K562 (cell line): ENCODE measurements at regions of chr9 and their contacts with region 1.

Region 1: GRCh38 chr9:69078581-69078980 is 43.0 kb downstream of the FXN start:
- DNase-seq: no peak
- ATAC-seq: no peak
- H3K4me3 ChIP-seq: no peak overlapping the region
- H3K27ac ChIP-seq: no peak overlapping the region
- H3K4me1 ChIP-seq: no peaks in the 10 kb centered on the region
- H3K27me3 ChIP-seq: no peaks in the 10 kb centered on the region
- CTCF ChIP-seq: no peak
- EP300 ChIP-seq: no peak
- POLR2A ChIP-seq: no peak
- RAD21 ChIP-seq: no peak

Region 2: DNA sequence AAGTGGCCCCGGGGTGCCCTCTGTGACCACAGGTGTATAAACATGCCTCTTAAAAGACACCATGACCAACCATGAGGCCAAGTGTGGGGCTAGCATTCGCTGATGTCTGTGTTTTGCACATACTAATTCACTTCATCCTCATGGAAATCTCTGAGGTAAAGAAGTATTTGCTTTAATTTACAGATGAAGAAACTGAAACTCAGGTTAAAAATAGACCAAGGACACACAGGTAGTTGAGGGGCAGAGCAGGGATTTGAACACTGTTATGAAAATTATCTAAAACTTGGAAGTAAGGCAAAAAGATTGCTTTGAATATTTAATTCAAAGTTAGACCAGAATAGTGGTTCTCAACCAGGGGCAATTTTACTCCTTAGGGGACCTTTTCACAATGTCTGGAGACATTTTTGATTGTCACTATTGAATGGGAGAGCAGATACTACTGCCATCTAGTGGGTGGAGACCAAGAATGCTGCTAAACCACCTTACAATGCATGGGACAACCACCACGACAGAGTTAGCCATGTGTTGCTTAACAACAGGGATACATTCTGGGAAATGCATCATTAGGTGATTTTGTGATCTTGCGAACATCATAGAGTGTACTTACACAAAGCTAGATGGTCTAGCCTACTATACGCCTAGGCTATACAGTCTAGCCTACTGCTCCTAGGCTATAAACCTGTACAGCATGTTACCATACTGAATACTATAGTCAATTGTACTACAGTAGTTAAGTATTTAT is 51.1 kb before region 1 on chr9:
- CTCF ChIA-PET with region 1: no interaction called
- POLR2A ChIA-PET with region 1: no interaction called
- in situ Hi-C with region 1: no loop called
- intact Hi-C with region 1: no loop called
- DNase-seq: peak; percentile 44 to 78 (median 58)
- ATAC-seq: peak; percentile 92
- H3K4me3 ChIP-seq: no peak overlapping the region
- H3K27ac ChIP-seq: no peak overlapping the region; the same call in 2 of the 3 replicates
- H3K4me1 ChIP-seq: peaks cover 13 to 25% of the 10 kb centered on the region in 2 experiments; a peak in 4 of 5 replicates
- H3K27me3 ChIP-seq: no peaks in the 10 kb centered on the region
- CTCF ChIP-seq: peak; percentile 66 to 77 (median 69)
- EP300 ChIP-seq: no peak
- POLR2A ChIP-seq: no peak
- RAD21 ChIP-seq: peak; percentile 58 to 80

Region 3: GRCh38 chr9:69066955-69067354 is 11.6 kb before region 1 on chr9:
- CTCF ChIA-PET with region 1: no interaction called
- POLR2A ChIA-PET with region 1: no interaction called
- in situ Hi-C with region 1: no loop called
- intact Hi-C with region 1: no loop called
- DNase-seq: peak in 2 of 4 experiments; percentile 19 to 27
- ATAC-seq: no peak
- H3K4me3 ChIP-seq: no peak overlapping the region
- H3K27ac ChIP-seq: no peak overlapping the region
- H3K4me1 ChIP-seq: no peaks in the 10 kb centered on the region; a peak in 1 of 5 replicates
- H3K27me3 ChIP-seq: no peaks in the 10 kb centered on the region
- CTCF ChIP-seq: no peak
- EP300 ChIP-seq: no peak
- POLR2A ChIP-seq: no peak
- RAD21 ChIP-seq: no peak

Region 4: GRCh38 chr9:69149321-69149807 is 70.8 kb after region 1 on chr9:
- CTCF ChIA-PET with region 1: no interaction called
- POLR2A ChIA-PET with region 1: no interaction called
- in situ Hi-C with region 1: no loop called
- intact Hi-C with region 1: loop called (anchors 10 kb)
- DNase-seq: no peak
- ATAC-seq: no peak
- H3K4me3 ChIP-seq: no peak overlapping the region
- H3K27ac ChIP-seq: no peak overlapping the region
- H3K4me1 ChIP-seq: no peaks in the 10 kb centered on the region
- H3K27me3 ChIP-seq: no peaks in the 10 kb centered on the region
- CTCF ChIP-seq: 0 out of 6 replicates have a peak, but pooled peaks of 1 of the 3 experiments have one; percentile 7
- EP300 ChIP-seq: no peak
- POLR2A ChIP-seq: no peak
- RAD21 ChIP-seq: no peak